ENCODE measurements at regions of chr15 and their contacts with region 1.

Region 1: GRCh38 chr15:90609242-90610180 is 79.8 kb downstream of the CRTC3 start:
- DNase-seq: peak in 1 of 2 donors; percentile 40
- H3K4me3 ChIP-seq: peak overlapping the region in 1 of 2 donors; percentile 13
- H3K27ac ChIP-seq: peak overlapping the region; percentile 76 to 79
- H3K4me1 ChIP-seq: peaks cover 0 to 70% (median 47%) of the 10 kb centered on the region in 4 donors
- H3K27me3 ChIP-seq: no peaks in the 10 kb centered on the region
- CTCF ChIP-seq: no peak

Region 2: GRCh38 chr15:90529371-90530249 is 79.9 kb before region 1 on chr15 and contains the start of gene CRTC3:
- intact Hi-C with region 1: loop called (anchors 5 kb)
- DNase-seq: peak; percentile 43 to 78
- H3K4me3 ChIP-seq: peak within 1 kb of the TSS; percentile 96 to 97
- H3K27ac ChIP-seq: peak within 1 kb of the TSS; percentile 90 to 96
- H3K4me1 ChIP-seq: peaks cover 0 to 45% (median 27%) of the 10 kb centered on the region in 4 donors
- H3K27me3 ChIP-seq: no peaks in the 10 kb centered on the region
- CTCF ChIP-seq: peak in 1 of 2 experiments; percentile 15

Region 3: DNA sequence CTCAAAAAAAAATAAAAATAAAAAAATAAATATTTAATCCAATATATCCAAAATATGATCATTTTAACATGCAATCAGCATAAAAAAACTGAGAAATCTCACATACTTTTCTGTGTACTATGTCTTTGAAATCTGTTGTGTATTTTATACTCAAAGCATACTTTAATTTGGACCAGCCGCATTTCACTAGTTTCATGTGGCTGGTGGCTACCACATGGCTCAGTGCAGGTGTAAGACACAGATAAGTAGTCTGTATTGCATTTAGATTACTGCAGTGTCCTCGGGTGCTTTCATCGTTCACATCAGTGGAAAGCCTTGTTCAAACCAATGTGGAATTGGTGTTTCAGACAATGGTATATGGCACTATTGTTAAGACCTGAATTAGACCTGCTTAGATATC is 68.7 kb before region 1 on chr15:
- intact Hi-C with region 1: no loop called
- DNase-seq: no peak
- H3K4me3 ChIP-seq: no peak overlapping the region
- H3K27ac ChIP-seq: no peak overlapping the region
- H3K4me1 ChIP-seq: peaks cover 0 to 48% (median 7%) of the 10 kb centered on the region in 4 donors
- H3K27me3 ChIP-seq: no peaks in the 10 kb centered on the region
- CTCF ChIP-seq: no peak